PC-9 (cell line): ENCODE measurements at regions of chr7 and their contacts with region 1.

Region 1: DNA sequence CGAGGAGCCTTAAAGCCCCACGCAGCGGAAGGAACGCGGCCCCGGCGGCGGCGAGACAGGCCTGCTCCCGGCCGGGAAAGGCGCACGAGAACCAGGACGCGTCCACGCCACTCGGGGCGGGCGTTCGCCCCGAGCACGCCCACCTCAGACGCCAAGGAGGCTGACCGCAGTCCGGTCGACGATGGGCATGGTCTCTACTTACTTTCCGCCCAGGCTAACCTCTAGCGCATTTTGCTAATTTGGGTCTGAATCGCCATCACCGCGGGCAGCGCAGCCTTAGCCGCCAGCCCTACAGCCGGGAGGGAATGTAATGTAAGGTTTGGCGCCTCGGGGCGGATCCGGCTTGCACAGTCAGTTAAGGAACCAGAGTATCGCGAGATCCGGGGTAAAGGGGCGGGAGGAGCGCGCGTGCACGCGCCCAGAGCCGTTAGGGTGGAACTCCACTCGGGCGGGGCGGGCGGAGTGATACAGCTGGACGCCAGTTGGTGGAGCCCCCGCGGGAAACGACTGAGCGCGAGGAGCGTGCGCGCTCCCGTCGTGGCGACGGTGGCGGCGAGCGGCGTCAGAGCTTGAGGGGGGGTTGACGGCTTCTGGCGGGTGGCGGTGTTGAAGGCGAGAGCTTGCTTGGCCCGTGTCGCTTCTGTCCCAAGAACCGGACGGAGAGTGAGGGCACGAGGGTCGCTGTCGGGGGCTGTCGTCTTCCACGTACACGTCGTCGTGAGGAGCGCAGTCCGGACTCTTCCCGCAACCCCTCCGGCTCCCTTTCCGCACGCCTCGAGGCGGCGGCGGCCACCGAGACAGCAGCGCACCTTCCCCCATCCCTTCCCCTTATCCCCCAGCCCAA is at the start of gene LUC7L2:
- DNase-seq: peak; percentile 97 to 100
- H3K4me3 ChIP-seq: peak within 1 kb of the TSS; percentile 89
- H3K27ac ChIP-seq: peak within 1 kb of the TSS; percentile 97
- H3K4me1 ChIP-seq: peaks cover 27% of the 10 kb centered on the region
- H3K27me3 ChIP-seq: no peaks in the 10 kb centered on the region
- CTCF ChIP-seq: peak; percentile 4; the same call in 1 of the 2 replicates
- total RNA-seq, gene LUC7L2: 111 and 149 TPM in 2 replicates

Region 2: GRCh38 chr7:139109188-139109982 is 250.2 kb before region 1 on chr7 and contains the start of gene ZC3HAV1:
- CTCF ChIA-PET with region 1: no interaction called
- POLR2A ChIA-PET with region 1: no interaction called
- intact Hi-C with region 1: loop called (anchors 1 kb)
- DNase-seq: peak; percentile 76 to 88
- H3K4me3 ChIP-seq: peak within 1 kb of the TSS; percentile 93
- H3K27ac ChIP-seq: peak within 1 kb of the TSS; percentile 75
- H3K4me1 ChIP-seq: peaks cover 21% of the 10 kb centered on the region
- H3K27me3 ChIP-seq: no peaks in the 10 kb centered on the region
- CTCF ChIP-seq: no peak
- total RNA-seq, gene ZC3HAV1: 30.8 and 36.7 TPM in 2 replicates

Region 3: DNA sequence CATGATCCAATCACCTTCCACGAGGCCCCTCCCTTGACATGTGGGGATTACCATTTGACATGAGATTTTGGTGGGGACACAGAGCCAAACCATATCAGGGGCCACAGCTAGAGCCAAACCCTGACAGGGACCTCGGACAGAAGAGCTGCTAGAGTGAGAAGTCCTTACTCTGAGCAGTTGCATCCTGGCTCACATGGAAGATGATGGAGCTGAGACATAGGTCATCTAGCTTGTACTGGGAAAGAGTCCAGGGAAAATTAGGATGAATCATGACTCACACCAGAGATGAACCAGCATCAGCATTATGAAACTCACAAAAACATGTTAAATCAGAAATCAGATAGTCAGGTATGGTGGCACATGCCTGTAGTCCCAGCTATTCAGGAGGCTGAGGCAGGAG is 31.2 kb before region 1 on chr7:
- CTCF ChIA-PET with region 1: no interaction called
- POLR2A ChIA-PET with region 1: no interaction called
- intact Hi-C with region 1: no loop called
- DNase-seq: peak in 1 of 2 experiments; percentile 36
- H3K4me3 ChIP-seq: no peak overlapping the region
- H3K27ac ChIP-seq: no peak overlapping the region
- H3K4me1 ChIP-seq: no peaks in the 10 kb centered on the region
- H3K27me3 ChIP-seq: no peaks in the 10 kb centered on the region
- CTCF ChIP-seq: no peak

Region 4: DNA sequence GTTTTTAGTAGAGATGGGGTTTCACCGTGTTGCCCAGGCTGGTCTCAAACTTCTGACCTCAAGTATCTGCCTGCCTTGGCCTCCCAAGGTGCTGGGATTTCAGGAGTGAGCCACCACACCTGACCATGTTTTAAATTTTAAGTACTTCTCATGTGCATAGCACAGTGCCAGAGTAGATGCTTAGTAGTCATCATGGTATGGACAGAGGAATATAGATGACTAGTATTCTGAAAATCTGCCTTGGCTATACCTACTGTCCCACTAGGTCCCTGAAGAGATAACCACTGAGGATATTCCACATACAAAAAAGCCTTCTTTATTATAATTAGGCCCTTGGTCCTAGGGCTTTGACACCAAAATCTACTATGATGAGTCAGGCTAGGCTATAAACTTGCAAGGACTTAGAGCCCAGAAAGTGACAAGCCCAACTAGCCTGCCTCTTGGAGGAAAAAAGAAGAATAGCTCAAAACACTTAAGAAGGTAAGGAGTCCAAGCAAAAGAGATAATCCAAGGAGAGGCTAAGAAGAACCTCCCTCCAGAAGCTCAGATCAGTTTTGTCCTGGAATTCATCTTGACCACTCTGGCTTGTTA is 34.1 kb after region 1 on chr7:
- CTCF ChIA-PET with region 1: no interaction called
- POLR2A ChIA-PET with region 1: interaction called, 11 read pairs
- intact Hi-C with region 1: no loop called
- DNase-seq: no peak
- H3K4me3 ChIP-seq: no peak overlapping the region
- H3K27ac ChIP-seq: no peak overlapping the region
- H3K4me1 ChIP-seq: no peaks in the 10 kb centered on the region
- H3K27me3 ChIP-seq: no peaks in the 10 kb centered on the region
- CTCF ChIP-seq: no peak

Region 5: DNA sequence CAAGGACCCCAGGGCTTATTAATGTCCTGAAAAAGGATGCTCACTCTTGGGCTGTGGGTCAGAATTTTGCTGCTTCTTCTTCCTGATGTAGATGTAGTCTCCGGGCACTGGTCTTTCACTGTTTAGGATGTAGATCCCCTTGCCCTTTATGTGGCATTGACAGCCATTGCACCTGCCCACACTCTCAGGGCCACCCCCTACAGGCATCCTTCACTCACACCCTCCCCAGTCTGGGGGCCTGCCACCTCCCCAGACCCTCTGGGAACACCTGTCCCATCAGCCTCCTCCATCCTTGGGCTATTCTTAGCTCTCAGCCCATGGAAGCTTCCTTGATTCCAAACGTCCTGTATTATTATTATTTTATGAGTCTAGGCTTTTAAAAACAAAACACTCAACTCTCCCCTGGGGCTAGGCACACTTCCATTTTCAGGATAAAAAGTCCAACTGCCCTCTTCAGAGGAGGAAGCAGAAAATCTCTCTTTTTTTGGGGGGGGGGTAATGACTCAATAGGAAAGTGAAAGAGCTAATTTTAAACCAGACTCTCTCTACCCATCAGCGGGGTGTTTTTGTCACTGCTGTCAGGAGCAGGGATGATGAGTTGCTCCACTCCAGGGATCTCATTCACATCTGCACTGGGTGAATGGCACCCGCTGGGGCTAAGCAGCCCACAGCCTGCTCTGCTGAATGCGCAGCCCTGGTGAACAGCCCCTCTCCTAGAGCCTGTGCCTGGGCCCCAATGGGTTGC is 135.4 kb after region 1 on chr7:
- CTCF ChIA-PET with region 1: no interaction called
- POLR2A ChIA-PET with region 1: interaction called, 12 read pairs
- intact Hi-C with region 1: no loop called
- DNase-seq: no peak
- H3K4me3 ChIP-seq: no peak overlapping the region
- H3K27ac ChIP-seq: no peak overlapping the region
- H3K4me1 ChIP-seq: no peaks in the 10 kb centered on the region
- H3K27me3 ChIP-seq: no peaks in the 10 kb centered on the region
- CTCF ChIP-seq: no peak